MCF 10A (cell line): ENCODE measurements at regions of chr19 and their contacts with region 1.

Region 1: DNA sequence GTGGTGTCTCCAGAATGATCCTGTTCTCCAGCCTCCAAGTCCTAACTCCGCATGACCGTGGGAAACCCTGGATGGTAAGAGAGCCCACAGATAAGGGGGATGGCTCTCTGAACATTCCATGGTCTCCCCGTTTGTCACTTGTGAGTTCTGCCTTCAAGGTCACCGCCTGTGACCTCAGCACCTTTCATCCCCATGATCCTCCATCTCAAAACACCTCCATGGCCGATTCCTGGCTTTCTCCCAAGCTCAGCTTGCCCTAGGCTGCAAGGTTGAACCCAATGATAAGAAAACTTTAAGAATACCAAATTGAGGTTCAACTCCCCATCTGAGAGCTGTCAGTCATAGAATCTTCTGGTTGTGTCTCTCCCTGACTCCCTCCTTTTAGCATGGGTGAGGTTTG is 47.9 kb downstream of the ACSBG2 start:
- DNase-seq: no peak
- H3K4me3 Mint-ChIP-seq: no peak overlapping the region
- H3K27ac Mint-ChIP-seq: no peak overlapping the region
- H3K4me1 Mint-ChIP-seq: no peaks in the 10 kb centered on the region
- H3K27me3 Mint-ChIP-seq: peaks cover 60% of the 10 kb centered on the region
- CTCF ChIP-seq: no peak

Region 2: DNA sequence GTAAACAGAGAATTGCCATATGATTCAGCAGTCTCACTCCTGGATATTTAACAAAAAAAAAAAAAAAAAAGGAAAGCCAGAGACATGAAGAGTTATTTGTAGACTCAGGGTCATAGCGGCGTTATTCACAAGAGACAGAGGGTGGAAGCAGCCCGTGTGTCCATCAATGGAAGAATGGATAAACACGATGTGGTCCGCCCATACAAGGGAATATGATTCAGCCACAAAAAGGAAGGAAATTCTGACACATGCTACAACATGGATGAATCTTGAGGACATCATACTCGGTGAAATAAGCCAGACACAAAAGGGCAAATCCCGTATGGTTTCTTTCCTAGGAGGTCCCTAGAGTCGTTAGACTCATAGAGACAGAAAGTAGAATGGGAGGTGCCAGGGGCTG is 33.1 kb before region 1 on chr19:
- CTCF ChIA-PET with region 1: no interaction called
- POLR2A ChIA-PET with region 1: no interaction called
- intact Hi-C with region 1: loop called (anchors 2 kb)
- DNase-seq: no peak
- H3K4me3 Mint-ChIP-seq: no peak overlapping the region
- H3K27ac Mint-ChIP-seq: no peak overlapping the region
- H3K4me1 Mint-ChIP-seq: no peaks in the 10 kb centered on the region
- H3K27me3 Mint-ChIP-seq: no peaks in the 10 kb centered on the region
- CTCF ChIP-seq: no peak

Region 3: GRCh38 chr19:6297202-6297601 is 113.8 kb after region 1 on chr19:
- CTCF ChIA-PET with region 1: no interaction called
- POLR2A ChIA-PET with region 1: no interaction called
- intact Hi-C with region 1: no loop called
- DNase-seq: no peak
- H3K4me3 Mint-ChIP-seq: no peak overlapping the region
- H3K27ac Mint-ChIP-seq: no peak overlapping the region
- H3K4me1 Mint-ChIP-seq: no peaks in the 10 kb centered on the region
- H3K27me3 Mint-ChIP-seq: no peaks in the 10 kb centered on the region
- CTCF ChIP-seq: no peak